ENCODE measurements at regions of chr1 and their contacts with region 1.

Region 1: GRCh38 chr1:229059671-229060539 is 211.0 kb upstream of the RAB4A start:
- DNase-seq: no peak
- H3K4me3 ChIP-seq: no peak overlapping the region
- H3K27ac ChIP-seq: peak overlapping the region; percentile 48 to 71 (median 56)
- H3K4me1 ChIP-seq: peaks cover 30 to 69% (median 51%) of the 10 kb centered on the region in 4 donors
- H3K27me3 ChIP-seq: no peaks in the 10 kb centered on the region
- CTCF ChIP-seq: no peak
- EP300 ChIP-seq: peak; percentile 73
- POLR2A ChIP-seq: no peak

Region 2: DNA sequence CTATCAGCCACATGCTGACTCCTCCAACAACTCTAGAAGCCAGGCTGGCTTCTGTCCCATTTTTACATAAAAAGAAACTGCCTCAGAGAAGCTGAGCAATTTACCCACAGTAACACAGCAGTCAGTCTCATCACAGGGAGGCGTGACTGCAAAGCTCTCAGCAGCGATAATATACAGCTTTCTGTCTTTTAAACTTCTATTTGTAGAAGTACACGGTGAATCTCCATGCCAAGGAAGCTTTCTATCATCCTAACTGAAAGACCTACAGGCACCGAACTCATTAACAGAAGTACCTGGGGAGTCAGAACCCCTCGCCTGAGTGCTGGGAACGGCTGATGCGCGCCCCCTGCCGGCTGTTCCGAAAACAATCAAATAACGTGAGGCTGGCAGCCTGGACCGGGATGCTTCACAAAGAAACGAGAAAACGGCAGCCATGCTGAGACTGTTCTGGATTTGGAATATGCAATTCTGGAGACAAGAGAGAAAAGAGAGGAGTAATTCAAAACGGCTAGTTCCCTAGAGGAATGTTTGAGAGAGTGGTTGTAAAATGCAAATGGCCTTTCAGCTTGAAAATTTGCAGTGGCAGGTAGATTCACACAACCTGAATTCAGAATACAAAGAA is 167.5 kb after region 1 on chr1:
- intact Hi-C with region 1: loop called (anchors 5 kb)
- DNase-seq: no peak
- H3K4me3 ChIP-seq: no peak overlapping the region
- H3K27ac ChIP-seq: peak overlapping the region in 1 of 4 donors; percentile 17
- H3K4me1 ChIP-seq: peaks cover 24 to 64% (median 55%) of the 10 kb centered on the region in 4 donors
- H3K27me3 ChIP-seq: no peaks in the 10 kb centered on the region
- CTCF ChIP-seq: peak; percentile 85 to 89 (median 86)
- EP300 ChIP-seq: no peak
- POLR2A ChIP-seq: no peak

Region 3: GRCh38 chr1:230531103-230531502 is 1471.2 kb after region 1 on chr1:
- intact Hi-C with region 1: no loop called
- DNase-seq: no peak
- H3K4me3 ChIP-seq: no peak overlapping the region
- H3K27ac ChIP-seq: no peak overlapping the region
- H3K4me1 ChIP-seq: no peaks in the 10 kb centered on the region
- H3K27me3 ChIP-seq: peaks cover 0 to 13% (median 0%) of the 10 kb centered on the region in 4 donors
- CTCF ChIP-seq: no peak
- EP300 ChIP-seq: no peak
- POLR2A ChIP-seq: no peak